ENCODE measurements at regions of chr3 and their contacts with region 1.

Region 1: DNA sequence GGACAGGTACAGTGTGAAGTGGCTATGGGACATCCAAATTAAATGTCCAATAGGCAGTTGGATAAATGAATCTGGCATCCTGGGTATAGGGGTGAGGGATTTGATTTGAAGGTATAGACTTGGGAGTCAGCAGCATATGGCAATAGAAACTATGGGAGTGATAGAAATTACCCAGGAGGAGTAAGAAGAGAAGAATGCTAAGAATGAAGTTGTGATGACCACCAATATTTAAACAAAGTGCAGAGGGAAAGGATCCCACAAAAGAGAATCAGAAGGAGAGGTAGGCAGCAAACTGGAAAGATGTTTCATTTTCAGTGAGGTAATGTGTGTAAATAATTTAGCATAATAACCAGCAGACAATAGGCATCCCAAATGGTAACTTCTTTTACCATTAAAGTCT is 13.8 kb upstream of the MSL2 start:
- DNase-seq: no peak
- ATAC-seq: no peak
- H3K4me3 ChIP-seq: no peak overlapping the region
- H3K4me3 Mint-ChIP-seq: no peak overlapping the region
- H3K27ac ChIP-seq: no peak overlapping the region
- H3K27ac Mint-ChIP-seq: no peak overlapping the region
- H3K4me1 ChIP-seq: no peaks in the 10 kb centered on the region
- H3K4me1 Mint-ChIP-seq: no peaks in the 10 kb centered on the region
- H3K27me3 ChIP-seq: no peaks in the 10 kb centered on the region
- H3K27me3 Mint-ChIP-seq: peaks cover 22% of the 10 kb centered on the region
- CTCF ChIP-seq: no peak

Region 2: DNA sequence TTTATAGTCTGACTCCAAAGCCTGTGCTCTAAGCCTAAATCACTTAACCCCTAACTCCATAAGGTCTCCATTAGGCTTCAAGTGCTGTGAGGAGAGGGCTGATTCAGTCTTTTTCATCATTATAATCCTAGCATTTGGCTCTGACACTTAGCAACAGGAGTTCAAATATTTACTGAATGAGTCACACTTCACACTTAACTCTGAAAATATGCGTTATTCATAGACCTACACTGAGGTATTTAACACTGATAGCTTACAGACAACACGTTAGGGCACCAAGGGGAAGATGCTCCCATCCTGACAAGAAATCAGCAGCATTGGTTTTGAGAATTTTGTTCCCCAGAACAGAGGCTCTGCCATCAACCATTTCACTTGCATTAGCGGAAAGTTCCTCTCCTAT is 67.3 kb before region 1 on chr3:
- CTCF ChIA-PET with region 1: no interaction called
- POLR2A ChIA-PET with region 1: no interaction called
- intact Hi-C with region 1: loop called in 1 of 2 experiments (anchors 2 kb)
- DNase-seq: peak in 1 of 14 experiments; percentile 19
- ATAC-seq: peak; percentile 47
- H3K4me3 ChIP-seq: no peak overlapping the region
- H3K4me3 Mint-ChIP-seq: no peak overlapping the region
- H3K27ac ChIP-seq: no peak overlapping the region
- H3K27ac Mint-ChIP-seq: peak overlapping the region; percentile 3
- H3K4me1 ChIP-seq: no peaks in the 10 kb centered on the region
- H3K4me1 Mint-ChIP-seq: peaks cover 23% of the 10 kb centered on the region
- H3K27me3 ChIP-seq: no peaks in the 10 kb centered on the region
- H3K27me3 Mint-ChIP-seq: no peaks in the 10 kb centered on the region
- CTCF ChIP-seq: no peak

Region 3: GRCh38 chr3:136262559-136262958 is 52.6 kb after region 1 on chr3:
- CTCF ChIA-PET with region 1: no interaction called
- POLR2A ChIA-PET with region 1: no interaction called
- intact Hi-C with region 1: no loop called
- DNase-seq: no peak
- ATAC-seq: no peak
- H3K4me3 ChIP-seq: no peak overlapping the region
- H3K4me3 Mint-ChIP-seq: no peak overlapping the region
- H3K27ac ChIP-seq: no peak overlapping the region
- H3K27ac Mint-ChIP-seq: no peak overlapping the region
- H3K4me1 ChIP-seq: no peaks in the 10 kb centered on the region
- H3K4me1 Mint-ChIP-seq: no peaks in the 10 kb centered on the region
- H3K27me3 ChIP-seq: no peaks in the 10 kb centered on the region
- H3K27me3 Mint-ChIP-seq: no peaks in the 10 kb centered on the region
- CTCF ChIP-seq: no peak

Measured in CD4-positive, alpha-beta T cell (primary cell).